BJ (cell line): ENCODE measurements at regions of chr15 and their contacts with region 1.

Region 1: GRCh38 chr15:80776420-80777045 is 2.6 kb upstream of the CEMIP start:
- DNase-seq: no peak
- H3K4me3 ChIP-seq: no peak overlapping the region
- H3K27me3 ChIP-seq: no peaks in the 10 kb centered on the region
- CTCF ChIP-seq: peak; percentile 85

Region 2: GRCh38 chr15:80455668-80456442 is 320.7 kb before region 1 on chr15:
- CTCF ChIA-PET with region 1: interaction called, 117 read pairs
- POLR2A ChIA-PET with region 1: interaction called, 9 read pairs
- DNase-seq: peak; percentile 88
- H3K4me3 ChIP-seq: no peak overlapping the region
- H3K27me3 ChIP-seq: no peaks in the 10 kb centered on the region
- CTCF ChIP-seq: peak; percentile 87

Region 3: DNA sequence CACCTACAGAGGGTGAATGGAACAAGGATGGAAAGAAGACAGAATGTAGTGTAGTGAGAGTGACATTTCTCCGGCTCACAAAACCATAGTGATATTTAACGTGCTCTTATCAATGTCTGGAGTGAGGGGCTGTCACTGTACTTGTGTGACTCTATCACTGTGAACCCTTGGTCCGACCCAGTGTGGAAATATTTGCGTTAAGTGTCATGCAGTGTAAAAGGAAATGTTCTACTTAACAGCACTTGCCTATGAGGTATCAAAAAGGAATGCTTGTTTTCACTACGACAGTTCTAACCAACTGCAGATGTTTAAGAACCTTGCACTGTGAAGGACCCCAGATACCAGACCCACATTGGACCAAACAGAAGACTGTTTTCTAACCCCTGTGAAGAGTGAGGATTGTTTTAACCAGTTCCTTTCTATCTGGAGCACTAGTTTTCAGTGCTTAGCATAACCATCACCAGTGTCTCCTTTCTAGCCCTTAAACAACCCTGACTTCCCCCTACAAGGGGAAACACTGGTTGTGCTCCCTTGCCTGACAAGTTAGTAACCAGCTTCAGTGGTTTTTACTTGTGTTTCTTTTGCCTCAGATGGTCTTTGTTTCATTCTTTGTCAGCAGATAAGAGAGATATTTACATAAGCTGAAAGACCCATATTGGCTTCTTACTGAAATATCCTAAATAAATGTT is 226.2 kb before region 1 on chr15:
- CTCF ChIA-PET with region 1: interaction called, 16 read pairs
- POLR2A ChIA-PET with region 1: interaction called, 4 read pairs
- DNase-seq: peak; percentile 85
- H3K4me3 ChIP-seq: no peak overlapping the region
- H3K27me3 ChIP-seq: no peaks in the 10 kb centered on the region
- CTCF ChIP-seq: no peak

Region 4: DNA sequence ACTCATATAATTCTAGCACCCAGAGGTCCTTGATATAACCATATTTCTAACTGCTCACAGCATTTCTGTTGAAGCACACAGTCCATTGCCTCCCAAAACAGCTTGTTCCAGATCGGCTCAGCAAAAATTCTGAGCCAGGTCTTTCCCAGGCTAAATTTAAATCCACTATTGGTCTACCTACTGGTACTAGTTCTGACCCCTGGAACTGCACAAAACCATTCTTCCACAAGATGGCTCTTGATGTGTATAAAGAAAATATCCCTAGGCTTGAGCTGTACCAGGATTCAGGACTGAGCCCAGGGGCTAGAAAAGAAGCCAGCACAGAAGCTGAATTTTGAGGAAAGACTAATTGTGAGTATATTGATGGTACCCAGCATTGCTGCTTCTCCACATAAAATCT is 156.9 kb before region 1 on chr15:
- CTCF ChIA-PET with region 1: interaction called, 32 read pairs
- POLR2A ChIA-PET with region 1: interaction called, 3 read pairs
- DNase-seq: no peak
- H3K4me3 ChIP-seq: no peak overlapping the region
- H3K27me3 ChIP-seq: no peaks in the 10 kb centered on the region
- CTCF ChIP-seq: peak; percentile 47

Region 5: DNA sequence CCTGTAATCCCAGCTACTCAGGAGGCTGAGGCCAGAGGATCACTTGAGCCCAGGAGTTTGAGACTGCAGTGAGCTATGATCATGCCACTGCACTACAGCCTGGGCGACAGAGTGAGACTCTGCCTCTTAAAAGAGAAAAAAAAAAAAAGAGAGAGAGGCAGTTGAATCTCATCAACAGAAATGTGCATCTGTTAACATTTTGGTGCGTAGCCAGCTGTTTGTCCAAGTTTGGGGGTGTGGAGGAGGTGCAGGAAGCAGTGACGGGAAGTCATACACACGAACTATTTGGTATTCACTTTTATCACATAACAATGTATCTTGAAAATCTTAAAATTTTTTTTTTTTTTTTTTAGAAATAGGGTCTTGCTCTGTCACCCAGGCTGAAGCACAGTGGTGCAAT is 15.6 kb before region 1 on chr15:
- CTCF ChIA-PET with region 1: interaction called, 24 read pairs
- POLR2A ChIA-PET with region 1: no interaction called
- DNase-seq: no peak
- H3K4me3 ChIP-seq: no peak overlapping the region
- H3K27me3 ChIP-seq: no peaks in the 10 kb centered on the region
- CTCF ChIP-seq: no peak

Region 6: GRCh38 chr15:80970018-80970658 is 193.6 kb after region 1 on chr15:
- CTCF ChIA-PET with region 1: interaction called, 16 read pairs
- POLR2A ChIA-PET with region 1: no interaction called
- DNase-seq: no peak
- H3K4me3 ChIP-seq: no peak overlapping the region
- H3K27me3 ChIP-seq: no peaks in the 10 kb centered on the region
- CTCF ChIP-seq: peak; percentile 77

Region 7: GRCh38 chr15:81146006-81146405 is 369.5 kb after region 1 on chr15:
- CTCF ChIA-PET with region 1: no interaction called
- POLR2A ChIA-PET with region 1: no interaction called
- DNase-seq: no peak
- H3K4me3 ChIP-seq: no peak overlapping the region
- H3K27me3 ChIP-seq: no peaks in the 10 kb centered on the region
- CTCF ChIP-seq: no peak